Activated CD4-positive, alpha-beta memory T cell treated with anti-CD3 and anti-CD28 coated beads for 36 hours (primary cell): ENCODE measurements at regions of chr21 and their contacts with region 1.

Region 1: DNA sequence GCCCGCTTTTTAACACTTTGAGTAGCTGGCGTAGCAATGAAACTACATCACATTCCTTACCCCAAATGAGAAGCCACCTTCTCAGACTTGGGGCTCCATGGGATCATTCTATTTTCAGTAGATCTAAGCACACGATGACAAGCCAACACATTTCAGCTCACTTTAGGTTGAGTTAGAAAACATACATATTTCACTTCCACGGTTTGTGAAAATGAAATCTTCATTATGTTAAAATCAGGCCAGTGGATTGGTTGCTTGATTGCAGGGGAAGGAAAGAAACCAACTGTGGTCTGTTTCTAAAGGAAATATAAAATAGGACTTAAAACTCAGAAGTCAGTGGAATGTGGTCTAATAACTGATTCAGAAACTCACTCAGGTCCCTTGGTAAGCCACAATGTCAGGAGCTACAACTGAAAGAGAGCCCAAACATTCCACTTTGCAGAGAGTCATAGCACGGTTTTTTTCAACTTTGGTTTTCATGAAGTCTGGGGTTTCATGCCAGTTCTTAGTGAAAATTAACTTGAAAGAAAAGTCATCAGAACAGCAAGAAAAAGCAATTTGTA is 82.3 kb upstream of the TIAM1 start:
- DNase-seq: no peak
- H3K4me3 Mint-ChIP-seq: no peak overlapping the region
- H3K27ac Mint-ChIP-seq: peak overlapping the region; percentile 25
- H3K4me1 Mint-ChIP-seq: peaks cover 8% of the 10 kb centered on the region
- H3K27me3 Mint-ChIP-seq: no peaks in the 10 kb centered on the region

Region 2: DNA sequence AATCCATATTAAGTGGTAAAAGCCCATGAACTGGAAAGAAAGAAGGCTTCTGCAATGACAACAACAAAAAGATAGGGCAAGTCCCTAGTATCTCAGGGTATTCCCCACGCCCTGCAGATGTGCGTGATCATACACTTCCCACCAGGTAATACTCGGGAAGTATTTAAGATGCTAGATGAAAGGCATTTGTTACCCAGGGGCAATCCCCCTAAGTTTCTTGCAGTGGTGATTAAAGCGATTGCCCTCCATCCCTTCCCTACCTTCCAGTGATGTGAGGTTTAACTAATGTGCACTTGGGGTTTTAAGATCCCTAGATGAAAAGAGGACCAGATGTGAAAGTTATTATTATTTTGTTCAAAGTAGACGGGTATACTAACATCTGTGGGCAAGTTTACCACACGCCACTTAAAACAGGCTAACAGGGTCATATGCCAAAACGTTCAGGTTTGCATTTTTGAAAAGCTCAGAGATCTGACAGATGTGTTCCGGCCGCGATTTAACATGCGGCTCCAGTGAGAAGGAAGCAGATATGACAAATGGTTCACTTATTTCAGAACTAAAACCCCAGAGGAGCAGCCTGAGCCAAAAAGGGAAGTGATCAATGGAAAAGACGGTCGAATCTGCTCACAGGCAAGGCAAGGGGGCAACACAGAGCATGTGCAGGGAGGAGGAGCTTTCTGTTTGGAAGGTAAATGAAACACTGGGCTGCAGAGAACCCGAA is 99.6 kb before region 1 on chr21:
- CTCF ChIA-PET with region 1: interaction called, 4 read pairs
- POLR2A ChIA-PET with region 1: interaction called, 7 read pairs
- intact Hi-C with region 1: loop called (anchors 1 kb)
- DNase-seq: peak; percentile 81
- H3K4me3 Mint-ChIP-seq: peak overlapping the region; percentile 47
- H3K27ac Mint-ChIP-seq: peak overlapping the region; percentile 88
- H3K4me1 Mint-ChIP-seq: peaks cover 30% of the 10 kb centered on the region
- H3K27me3 Mint-ChIP-seq: no peaks in the 10 kb centered on the region

Region 3: DNA sequence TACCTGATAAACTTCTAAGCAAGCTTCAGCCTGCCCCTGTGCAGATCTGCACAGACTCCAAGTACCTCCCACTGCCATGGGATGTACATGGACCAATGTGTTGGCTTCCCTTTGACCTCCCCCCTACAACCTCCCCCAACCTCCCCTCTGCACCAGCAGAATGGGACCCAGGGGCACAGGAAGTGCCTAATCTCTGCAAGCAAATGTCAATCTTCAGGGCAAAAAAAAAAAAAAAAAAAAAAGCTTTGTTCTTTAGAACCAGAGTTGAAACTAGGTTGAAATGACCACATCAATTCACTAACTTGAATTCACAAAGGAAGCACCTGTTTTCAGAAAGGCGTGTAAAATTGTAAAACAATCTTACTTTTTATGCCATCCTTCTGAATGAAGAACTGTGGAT is 28.4 kb before region 1 on chr21:
- CTCF ChIA-PET with region 1: no interaction called
- POLR2A ChIA-PET with region 1: no interaction called
- intact Hi-C with region 1: loop called (anchors 2 kb)
- DNase-seq: peak; percentile 15
- H3K4me3 Mint-ChIP-seq: no peak overlapping the region
- H3K27ac Mint-ChIP-seq: no peak overlapping the region
- H3K4me1 Mint-ChIP-seq: peaks cover 34% of the 10 kb centered on the region
- H3K27me3 Mint-ChIP-seq: no peaks in the 10 kb centered on the region

Region 4: GRCh38 chr21:31509194-31510017 is 83.1 kb after region 1 on chr21:
- CTCF ChIA-PET with region 1: no interaction called
- POLR2A ChIA-PET with region 1: no interaction called
- intact Hi-C with region 1: loop called (anchors 1 kb)
- DNase-seq: peak; percentile 92
- H3K4me3 Mint-ChIP-seq: peak overlapping the region; percentile 44
- H3K27ac Mint-ChIP-seq: peak overlapping the region; percentile 60
- H3K4me1 Mint-ChIP-seq: peaks cover 24% of the 10 kb centered on the region
- H3K27me3 Mint-ChIP-seq: no peaks in the 10 kb centered on the region